Thyroid gland (tissue), 4 donors: ENCODE measurements at regions of chr16 and their contacts with region 1.

Region 1: DNA sequence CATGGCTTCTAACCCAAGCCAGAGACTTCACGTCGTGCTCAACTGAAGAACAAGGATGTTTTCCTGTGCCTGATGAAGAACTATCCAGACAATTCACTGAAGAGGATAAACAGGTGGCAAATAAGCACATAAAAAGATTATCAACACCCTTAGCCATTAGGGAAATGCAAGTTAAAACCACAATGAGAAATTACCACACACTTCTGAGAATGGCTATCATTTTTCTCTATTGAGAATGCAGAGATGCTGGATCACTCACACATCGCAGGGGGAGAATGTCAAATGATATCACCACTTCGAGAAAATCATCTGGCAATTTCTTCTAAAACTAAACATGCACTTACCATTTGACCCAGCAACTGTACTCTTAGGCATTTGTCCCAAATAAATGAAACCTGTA is 162.8 kb downstream of the IRX3 start:
- DNase-seq: no peak
- H3K4me3 ChIP-seq: no peak overlapping the region
- H3K27ac ChIP-seq: no peak overlapping the region
- H3K4me1 ChIP-seq: no peaks in the 10 kb centered on the region
- H3K27me3 ChIP-seq: no peaks in the 10 kb centered on the region
- CTCF ChIP-seq: no peak
- POLR2A ChIP-seq: no peak

Region 2: GRCh38 chr16:54062361-54063278 is 61.1 kb before region 1 on chr16:
- intact Hi-C with region 1: loop called (anchors 10 kb)
- DNase-seq: no peak
- H3K4me3 ChIP-seq: no peak overlapping the region
- H3K27ac ChIP-seq: no peak overlapping the region
- H3K4me1 ChIP-seq: peaks cover 0 to 9% of the 10 kb centered on the region in 2 donors
- H3K27me3 ChIP-seq: no peaks in the 10 kb centered on the region
- CTCF ChIP-seq: no peak
- POLR2A ChIP-seq: no peak